Activated CD4-positive, alpha-beta T cell treated with anti-CD3 and anti-CD28 coated beads for 36 hours (primary cell): ENCODE measurements at regions of chr13 and their contacts with region 1.

Region 1: DNA sequence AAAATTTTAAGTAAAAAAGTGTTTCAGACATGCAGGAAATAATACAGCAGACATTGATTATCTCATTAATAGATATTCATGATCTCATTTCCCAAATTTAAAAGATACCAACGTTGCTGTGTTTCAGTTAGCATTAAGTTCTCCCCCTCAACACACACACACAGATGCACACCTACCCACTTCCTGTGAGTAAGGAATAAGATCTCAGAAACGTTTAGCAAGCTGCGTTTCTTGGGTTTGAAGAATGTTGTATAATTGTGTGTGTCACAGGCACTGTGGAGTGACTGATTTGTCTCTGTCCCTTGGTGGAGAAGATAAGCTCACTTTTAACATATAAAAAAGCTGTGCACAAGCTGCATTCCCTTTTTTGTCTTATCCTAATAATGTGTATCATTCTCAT is 196.8 kb downstream of the PDS5B start:
- DNase-seq: peak; percentile 36
- ATAC-seq: peak; percentile 97
- H3K4me3 Mint-ChIP-seq: no peak overlapping the region
- H3K27ac Mint-ChIP-seq: no peak overlapping the region
- H3K4me1 Mint-ChIP-seq: peaks cover 17% of the 10 kb centered on the region
- H3K27me3 Mint-ChIP-seq: no peaks in the 10 kb centered on the region

Region 2: DNA sequence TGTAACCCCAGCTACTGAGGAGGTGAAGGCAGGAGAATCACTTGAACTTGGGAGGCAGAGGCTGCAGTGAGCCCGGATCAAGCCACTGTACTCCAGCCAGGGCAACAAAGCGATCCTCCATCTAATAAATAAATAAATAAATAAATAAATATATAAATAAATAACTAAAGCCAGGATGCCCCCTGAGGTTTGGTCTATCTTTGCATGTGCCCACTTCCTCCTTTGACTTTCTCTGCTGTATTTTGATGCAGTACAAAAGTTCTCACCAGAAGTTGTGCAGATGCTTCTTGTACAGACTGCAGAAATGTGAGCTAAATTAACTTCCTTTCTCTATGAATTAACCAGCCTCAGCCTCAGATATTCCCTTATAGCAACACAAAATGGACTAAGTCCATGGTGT is 238.0 kb before region 1 on chr13:
- CTCF ChIA-PET with region 1: no interaction called
- POLR2A ChIA-PET with region 1: no interaction called
- intact Hi-C with region 1: no loop called
- DNase-seq: no peak
- ATAC-seq: no peak
- H3K4me3 Mint-ChIP-seq: no peak overlapping the region
- H3K27ac Mint-ChIP-seq: no peak overlapping the region
- H3K4me1 Mint-ChIP-seq: no peaks in the 10 kb centered on the region
- H3K27me3 Mint-ChIP-seq: peaks cover 4% of the 10 kb centered on the region

Region 3: DNA sequence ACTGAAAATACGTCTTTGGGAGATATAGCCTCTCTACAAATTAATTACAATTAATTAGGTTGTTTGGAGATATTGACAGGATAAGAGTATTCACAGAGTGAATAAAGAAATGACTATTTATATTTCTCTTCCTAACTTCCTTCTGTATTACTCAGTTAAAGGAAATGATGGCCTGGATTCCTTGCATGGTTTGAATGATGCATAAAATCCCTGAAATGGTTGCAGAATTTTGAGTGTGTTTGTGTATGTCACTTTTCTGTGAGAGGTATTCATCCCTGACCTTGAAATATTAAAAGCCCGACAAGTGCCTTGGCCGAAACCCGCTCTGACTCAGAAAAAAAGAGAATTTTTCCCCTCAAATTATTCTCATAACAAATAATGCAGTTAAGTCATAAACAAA is 106.8 kb before region 1 on chr13:
- CTCF ChIA-PET with region 1: no interaction called
- POLR2A ChIA-PET with region 1: no interaction called
- intact Hi-C with region 1: no loop called
- DNase-seq: no peak
- ATAC-seq: no peak
- H3K4me3 Mint-ChIP-seq: no peak overlapping the region
- H3K27ac Mint-ChIP-seq: no peak overlapping the region
- H3K4me1 Mint-ChIP-seq: no peaks in the 10 kb centered on the region
- H3K27me3 Mint-ChIP-seq: no peaks in the 10 kb centered on the region

Region 4: GRCh38 chr13:32720026-32720425 is 63.0 kb before region 1 on chr13:
- CTCF ChIA-PET with region 1: no interaction called
- POLR2A ChIA-PET with region 1: no interaction called
- intact Hi-C with region 1: no loop called
- DNase-seq: no peak
- ATAC-seq: no peak
- H3K4me3 Mint-ChIP-seq: no peak overlapping the region
- H3K27ac Mint-ChIP-seq: no peak overlapping the region
- H3K4me1 Mint-ChIP-seq: peaks cover 12% of the 10 kb centered on the region
- H3K27me3 Mint-ChIP-seq: no peaks in the 10 kb centered on the region

Region 5: GRCh38 chr13:32731576-32731975 is 51.5 kb before region 1 on chr13:
- CTCF ChIA-PET with region 1: no interaction called
- POLR2A ChIA-PET with region 1: no interaction called
- intact Hi-C with region 1: loop called in 1 of 2 experiments (anchors 2 kb)
- DNase-seq: peak; percentile 36
- ATAC-seq: peak; percentile 86
- H3K4me3 Mint-ChIP-seq: no peak overlapping the region
- H3K27ac Mint-ChIP-seq: peak overlapping the region; percentile 27
- H3K4me1 Mint-ChIP-seq: peaks cover 39% of the 10 kb centered on the region
- H3K27me3 Mint-ChIP-seq: no peaks in the 10 kb centered on the region

Region 6: DNA sequence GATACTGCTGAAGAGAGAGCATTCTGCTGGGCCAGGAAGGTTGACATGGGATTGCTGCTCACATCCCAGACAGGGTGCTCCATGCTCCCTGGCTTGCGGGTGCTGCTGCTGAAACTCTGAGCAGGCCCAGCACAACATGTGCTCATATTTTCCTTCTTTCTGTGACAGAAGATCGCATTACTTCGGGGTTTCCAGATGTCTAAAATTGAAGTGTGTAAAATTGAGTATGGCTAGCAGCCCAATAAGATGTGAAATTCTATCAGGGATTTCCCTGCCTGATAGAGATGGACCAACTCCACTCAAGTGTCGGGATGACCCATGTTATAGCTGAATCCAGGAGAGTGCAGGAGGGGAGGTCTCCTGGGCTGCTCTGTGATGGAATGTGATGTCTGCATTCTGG is 177.6 kb after region 1 on chr13:
- CTCF ChIA-PET with region 1: no interaction called
- POLR2A ChIA-PET with region 1: no interaction called
- intact Hi-C with region 1: no loop called
- DNase-seq: no peak
- ATAC-seq: no peak
- H3K4me3 Mint-ChIP-seq: no peak overlapping the region
- H3K27ac Mint-ChIP-seq: no peak overlapping the region
- H3K4me1 Mint-ChIP-seq: no peaks in the 10 kb centered on the region
- H3K27me3 Mint-ChIP-seq: peaks cover 6% of the 10 kb centered on the region